Endothelial cell of umbilical vein (primary cell): ENCODE measurements at regions of chr12 and their contacts with region 1.

Region 1: DNA sequence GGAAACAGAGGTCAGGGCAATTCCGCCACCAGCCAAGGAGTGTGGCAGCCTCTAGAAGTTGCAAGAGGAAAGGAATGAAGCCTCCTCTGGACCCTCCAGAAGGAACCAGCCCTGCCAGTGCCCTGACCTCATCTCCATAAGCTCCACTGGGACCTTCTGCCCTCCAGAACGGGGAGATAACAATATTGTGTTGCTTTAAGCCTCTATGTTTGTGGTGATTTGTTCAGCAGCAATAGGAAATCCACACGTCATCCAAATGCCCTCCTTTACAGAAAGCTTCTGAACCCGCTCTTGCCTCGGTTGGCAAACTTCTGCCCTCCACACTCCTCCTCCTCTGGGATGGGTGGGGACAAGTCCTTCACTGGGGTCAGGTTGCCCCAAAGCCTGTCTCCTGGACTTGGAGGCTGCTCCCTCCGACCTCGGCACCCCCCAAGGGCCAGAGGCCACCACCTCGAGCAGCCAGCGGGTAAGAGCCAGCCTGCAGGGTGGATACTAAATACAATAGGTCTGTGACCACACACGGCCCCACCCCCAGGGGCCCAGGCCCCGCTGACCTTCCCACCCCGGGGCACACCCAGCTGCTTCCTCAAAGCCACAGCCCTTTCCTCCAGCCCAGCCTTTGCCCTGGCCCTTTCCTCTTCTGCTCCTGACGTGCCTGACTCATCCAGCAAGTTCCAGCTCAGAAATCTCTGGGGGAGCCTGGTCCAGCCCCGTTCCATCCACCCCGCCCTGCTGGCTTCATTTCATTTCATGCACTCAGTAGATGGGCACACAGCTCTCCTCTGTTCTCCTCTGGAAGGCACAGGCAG is 58.7 kb upstream of the NCOR2 start:
- DNase-seq: peak; percentile 91
- H3K4me3 ChIP-seq: no peak overlapping the region
- H3K27ac ChIP-seq: peak overlapping the region; percentile 91
- H3K4me1 ChIP-seq: peaks cover 26% of the 10 kb centered on the region
- H3K27me3 ChIP-seq: no peaks in the 10 kb centered on the region
- CTCF ChIP-seq: no peak
- POLR2A ChIP-seq: peak; percentile 51

Region 2: DNA sequence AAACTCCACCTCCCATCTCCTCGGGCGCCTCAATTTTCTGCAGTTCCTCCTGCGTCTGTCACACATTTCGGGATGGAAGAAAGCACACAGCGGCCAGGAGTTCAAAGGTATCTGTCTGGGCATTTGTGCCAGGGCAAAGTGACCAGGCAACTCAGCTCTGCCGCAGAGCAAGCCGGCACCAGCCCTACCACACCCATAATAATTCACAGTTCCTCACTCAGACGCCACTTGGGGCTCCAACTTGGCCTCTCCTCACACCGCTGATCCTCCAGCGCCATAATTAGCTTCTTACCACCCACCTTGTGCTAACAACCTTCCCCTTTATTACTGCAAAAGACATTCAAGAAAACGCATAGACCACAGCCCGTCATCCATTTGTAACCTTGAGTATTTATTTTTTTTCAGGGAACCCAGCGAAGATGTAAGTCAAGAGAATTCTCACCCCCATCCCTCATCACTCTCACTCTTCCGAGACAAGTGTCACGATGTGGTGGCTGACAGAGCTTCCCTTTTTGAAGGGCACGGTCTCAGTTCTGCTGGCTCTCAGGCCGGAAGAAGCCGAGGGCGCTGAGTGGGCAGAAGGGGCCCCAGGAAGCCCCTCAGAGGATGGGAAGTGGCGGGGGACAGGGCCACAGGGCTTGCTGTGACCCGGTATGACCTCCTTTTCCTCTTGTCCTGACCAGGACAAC is 33.5 kb before region 1 on chr12:
- CTCF ChIA-PET with region 1: interaction called, 5 read pairs
- POLR2A ChIA-PET with region 1: no interaction called
- dilution Hi-C with region 1: no loop called
- intact Hi-C with region 1: loop called (anchors 1 kb)
- DNase-seq: no peak
- H3K4me3 ChIP-seq: no peak overlapping the region
- H3K27ac ChIP-seq: peak overlapping the region; percentile 85
- H3K4me1 ChIP-seq: peaks cover 24% of the 10 kb centered on the region
- H3K27me3 ChIP-seq: no peaks in the 10 kb centered on the region
- CTCF ChIP-seq: no peak
- POLR2A ChIP-seq: no peak

Region 3: DNA sequence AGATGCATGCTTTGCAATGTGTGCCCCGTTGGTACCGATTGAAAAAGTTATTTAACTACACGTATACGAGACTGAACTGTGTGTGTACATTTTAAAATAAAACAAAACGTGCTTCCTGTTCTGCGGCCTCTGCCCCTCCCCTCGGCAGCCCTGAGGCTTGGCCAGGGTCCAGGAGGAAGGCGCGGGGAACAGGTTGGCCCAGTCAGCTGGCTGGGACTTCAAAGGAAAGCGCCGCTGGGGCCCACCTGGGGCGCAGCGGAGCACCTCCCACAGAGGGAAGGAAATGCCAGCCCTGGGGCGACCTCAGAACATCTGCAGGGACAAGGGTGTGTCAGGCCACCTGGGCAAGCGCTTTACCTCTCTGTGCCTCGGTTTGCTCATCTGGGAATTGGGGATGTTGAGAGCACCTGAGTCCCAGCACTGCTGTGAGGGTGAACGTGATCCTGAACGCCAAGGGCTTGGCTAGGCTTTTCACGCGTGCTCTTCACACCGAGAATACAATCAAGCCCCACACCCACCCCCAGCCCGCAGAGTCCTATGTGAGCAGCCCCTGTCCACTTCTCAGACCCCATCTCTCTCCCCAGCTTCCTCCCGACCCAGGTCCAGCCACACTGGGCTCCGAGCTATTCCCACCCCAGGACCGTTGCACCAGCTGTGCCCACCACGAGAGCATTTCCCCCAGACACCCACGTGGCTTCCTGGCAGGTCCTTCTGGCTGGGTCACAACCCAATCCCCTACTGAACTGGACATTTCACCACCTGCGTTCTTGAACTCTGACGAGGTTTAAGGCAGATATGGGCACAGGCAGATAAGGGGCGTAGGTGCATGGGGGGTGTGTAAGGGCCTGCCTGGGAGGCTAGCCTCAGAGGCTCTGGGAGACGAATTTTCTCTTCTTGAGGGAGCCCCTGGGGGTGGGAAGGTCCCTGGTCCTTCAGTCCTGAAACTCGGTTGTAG is 16.8 kb before region 1 on chr12:
- CTCF ChIA-PET with region 1: interaction called, 3 read pairs
- POLR2A ChIA-PET with region 1: no interaction called
- dilution Hi-C with region 1: no loop called
- intact Hi-C with region 1: loop called (anchors 1 kb)
- DNase-seq: peak; percentile 76
- H3K4me3 ChIP-seq: no peak overlapping the region
- H3K27ac ChIP-seq: no peak overlapping the region
- H3K4me1 ChIP-seq: peaks cover 23% of the 10 kb centered on the region
- H3K27me3 ChIP-seq: no peaks in the 10 kb centered on the region
- CTCF ChIP-seq: no peak
- POLR2A ChIP-seq: no peak

Region 4: GRCh38 chr12:124720004-124720680 is 94.1 kb after region 1 on chr12:
- CTCF ChIA-PET with region 1: interaction called, 9 read pairs
- POLR2A ChIA-PET with region 1: interaction called, 3 read pairs
- dilution Hi-C with region 1: no loop called
- intact Hi-C with region 1: loop called (anchors 1 kb)
- DNase-seq: peak; percentile 72
- H3K4me3 ChIP-seq: no peak overlapping the region
- H3K27ac ChIP-seq: peak overlapping the region; percentile 80
- H3K4me1 ChIP-seq: peaks cover 27% of the 10 kb centered on the region
- H3K27me3 ChIP-seq: no peaks in the 10 kb centered on the region
- CTCF ChIP-seq: peak; percentile 20 to 38
- POLR2A ChIP-seq: no peak